Heart right ventricle (tissue), 16 donors: ENCODE measurements at regions of chr2 and their contacts with region 1.

Region 1: DNA sequence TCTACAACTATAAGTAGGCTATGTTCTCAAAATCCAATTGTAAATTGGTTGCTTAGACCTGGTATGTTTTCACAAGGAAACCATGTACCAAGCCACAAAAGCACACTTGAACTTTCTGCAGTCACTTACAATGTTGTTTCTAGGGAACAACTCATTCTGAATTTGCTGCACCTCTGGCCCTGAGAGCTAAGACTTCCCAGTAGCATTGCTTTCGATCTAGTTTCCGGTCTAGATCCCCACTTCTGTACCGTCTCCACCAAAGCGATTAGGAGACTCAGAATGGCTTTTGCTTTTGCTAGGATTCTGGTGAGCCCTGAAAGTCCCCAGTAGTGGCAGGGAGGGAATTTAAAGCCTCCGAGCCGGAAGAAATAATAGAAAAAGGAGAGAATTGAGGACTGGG is 313.0 kb downstream of the ARHGAP15 start:
- DNase-seq: no peak
- ATAC-seq: peak in 2 of 8 donors; percentile 33 to 52
- H3K4me3 ChIP-seq: peak overlapping the region in 1 of 10 donors; percentile 6
- H3K27ac ChIP-seq: peak overlapping the region in 8 of 10 donors; percentile 1 to 74 (median 44)
- H3K4me1 ChIP-seq: peaks cover 0 to 7% (median 0%) of the 10 kb centered on the region in 9 donors
- H3K27me3 ChIP-seq: no peaks in the 10 kb centered on the region
- CTCF ChIP-seq: no peak

Region 2: DNA sequence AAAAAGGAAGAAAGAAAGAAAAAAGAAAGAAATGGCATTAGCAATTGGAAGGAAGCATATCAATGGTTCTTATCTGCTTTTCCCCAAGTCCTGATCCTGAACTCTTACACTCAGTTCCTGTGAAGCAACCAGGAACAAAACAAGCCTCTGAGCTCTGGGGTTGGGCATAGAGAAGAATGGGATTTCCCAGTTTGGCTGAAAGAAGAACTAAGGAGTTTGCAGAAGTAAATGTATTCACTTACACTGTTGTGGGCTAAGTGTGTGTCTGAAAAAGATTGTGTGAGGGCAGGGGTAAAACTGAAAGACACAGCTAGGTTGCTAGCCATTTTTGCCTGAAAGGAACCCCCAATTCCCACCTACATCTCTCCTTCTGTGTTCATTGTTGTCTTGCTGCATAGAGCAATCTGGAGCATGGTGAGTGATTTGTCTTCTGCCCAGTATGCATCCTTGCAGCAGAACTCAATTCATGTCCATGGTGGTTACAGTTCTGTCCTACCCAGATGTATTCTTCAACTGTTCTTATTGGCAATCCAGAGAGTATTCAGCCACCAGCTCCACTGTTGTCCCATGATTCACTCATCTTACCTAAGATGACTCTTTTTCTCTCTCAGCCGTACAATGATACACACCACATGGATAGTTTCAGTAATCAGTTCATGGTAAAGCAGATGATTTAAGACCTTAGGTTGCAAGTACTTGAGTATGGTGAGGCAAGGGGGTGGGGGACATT is 35.7 kb after region 1 on chr2:
- intact Hi-C with region 1: loop called in 3 of 10 experiments (anchors 5 kb)
- DNase-seq: no peak
- ATAC-seq: no peak
- H3K4me3 ChIP-seq: no peak overlapping the region
- H3K27ac ChIP-seq: peak overlapping the region in 2 of 10 donors; percentile 4 to 20
- H3K4me1 ChIP-seq: peaks cover 0 to 39% (median 12%) of the 10 kb centered on the region in 9 donors
- H3K27me3 ChIP-seq: no peaks in the 10 kb centered on the region
- CTCF ChIP-seq: no peak

Region 3: GRCh38 chr2:144143294-144144151 is 701.3 kb after region 1 on chr2:
- intact Hi-C with region 1: loop called in 1 of 10 experiments (anchors 5 kb)
- DNase-seq: no peak
- ATAC-seq: peak in 5 of 8 donors; percentile 23 to 64 (median 35)
- H3K4me3 ChIP-seq: peak overlapping the region in 1 of 10 donors; percentile 2
- H3K27ac ChIP-seq: peak overlapping the region in 5 of 10 donors; percentile 31 to 79 (median 41)
- H3K4me1 ChIP-seq: peaks cover 0 to 34% (median 0%) of the 10 kb centered on the region in 9 donors
- H3K27me3 ChIP-seq: no peaks in the 10 kb centered on the region
- CTCF ChIP-seq: no peak